Activated CD4-positive, alpha-beta memory T cell treated with anti-CD3 and anti-CD28 coated beads for 36 hours (primary cell): ENCODE measurements at regions of chr11 and their contacts with region 1.

Region 1: GRCh38 chr11:111601979-111602864 is at the start of gene SIK2:
- DNase-seq: peak; percentile 93
- H3K4me3 Mint-ChIP-seq: peak within 1 kb of the TSS; percentile 91
- H3K27ac Mint-ChIP-seq: peak within 1 kb of the TSS; percentile 77
- H3K4me1 Mint-ChIP-seq: peaks cover 30% of the 10 kb centered on the region
- H3K27me3 Mint-ChIP-seq: no peaks in the 10 kb centered on the region
- total RNA-seq, gene SIK2: 4.6 to 6.2 TPM

Region 2: DNA sequence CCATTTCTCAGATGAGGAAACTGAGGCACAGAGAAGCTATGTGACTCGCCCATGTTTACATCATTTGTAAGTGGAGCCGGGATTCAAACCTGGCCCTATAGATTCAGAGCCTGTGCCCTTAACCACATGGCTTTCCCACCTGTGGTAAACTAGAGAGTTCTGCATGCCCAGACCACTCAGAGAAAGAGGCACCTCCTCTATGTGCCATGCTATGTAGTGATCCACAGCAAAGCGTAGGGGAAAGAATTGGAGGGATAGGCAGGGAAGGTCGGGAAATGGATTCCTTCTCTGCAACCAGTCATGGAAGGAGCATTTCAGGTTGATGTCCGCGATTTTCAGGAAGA is 372.1 kb before region 1 on chr11:
- CTCF ChIA-PET with region 1: no interaction called
- POLR2A ChIA-PET with region 1: no interaction called
- intact Hi-C with region 1: no loop called
- DNase-seq: no peak
- H3K4me3 Mint-ChIP-seq: no peak overlapping the region
- H3K27ac Mint-ChIP-seq: no peak overlapping the region
- H3K4me1 Mint-ChIP-seq: peaks cover 15% of the 10 kb centered on the region
- H3K27me3 Mint-ChIP-seq: peaks cover 16% of the 10 kb centered on the region

Region 3: GRCh38 chr11:111531687-111532364 is 70.4 kb before region 1 on chr11:
- CTCF ChIA-PET with region 1: interaction called, 3 read pairs
- POLR2A ChIA-PET with region 1: no interaction called
- intact Hi-C with region 1: loop called (anchors 5 kb)
- DNase-seq: peak; percentile 85
- H3K4me3 Mint-ChIP-seq: no peak overlapping the region
- H3K27ac Mint-ChIP-seq: no peak overlapping the region
- H3K4me1 Mint-ChIP-seq: peaks cover 26% of the 10 kb centered on the region
- H3K27me3 Mint-ChIP-seq: peaks cover 25% of the 10 kb centered on the region

Region 4: GRCh38 chr11:111612224-111612623 is 10.0 kb after region 1 on chr11:
- CTCF ChIA-PET with region 1: interaction called, 14 read pairs
- POLR2A ChIA-PET with region 1: no interaction called
- intact Hi-C with region 1: no loop called
- DNase-seq: no peak
- H3K4me3 Mint-ChIP-seq: no peak overlapping the region
- H3K27ac Mint-ChIP-seq: no peak overlapping the region
- H3K4me1 Mint-ChIP-seq: peaks cover 9% of the 10 kb centered on the region
- H3K27me3 Mint-ChIP-seq: no peaks in the 10 kb centered on the region

Region 5: GRCh38 chr11:111766093-111766833 is 164.0 kb after region 1 on chr11 and contains the start of gene PPP2R1B:
- CTCF ChIA-PET with region 1: interaction called, 12 read pairs
- POLR2A ChIA-PET with region 1: interaction called, 4 read pairs
- intact Hi-C with region 1: loop called (anchors 1 kb)
- DNase-seq: peak; percentile 81
- H3K4me3 Mint-ChIP-seq: peak within 1 kb of the TSS; percentile 100
- H3K27ac Mint-ChIP-seq: peak within 1 kb of the TSS; percentile 89
- H3K4me1 Mint-ChIP-seq: peaks cover 34% of the 10 kb centered on the region
- H3K27me3 Mint-ChIP-seq: no peaks in the 10 kb centered on the region
- total RNA-seq, gene PPP2R1B: 49.4 to 51.1 TPM

Region 6: DNA sequence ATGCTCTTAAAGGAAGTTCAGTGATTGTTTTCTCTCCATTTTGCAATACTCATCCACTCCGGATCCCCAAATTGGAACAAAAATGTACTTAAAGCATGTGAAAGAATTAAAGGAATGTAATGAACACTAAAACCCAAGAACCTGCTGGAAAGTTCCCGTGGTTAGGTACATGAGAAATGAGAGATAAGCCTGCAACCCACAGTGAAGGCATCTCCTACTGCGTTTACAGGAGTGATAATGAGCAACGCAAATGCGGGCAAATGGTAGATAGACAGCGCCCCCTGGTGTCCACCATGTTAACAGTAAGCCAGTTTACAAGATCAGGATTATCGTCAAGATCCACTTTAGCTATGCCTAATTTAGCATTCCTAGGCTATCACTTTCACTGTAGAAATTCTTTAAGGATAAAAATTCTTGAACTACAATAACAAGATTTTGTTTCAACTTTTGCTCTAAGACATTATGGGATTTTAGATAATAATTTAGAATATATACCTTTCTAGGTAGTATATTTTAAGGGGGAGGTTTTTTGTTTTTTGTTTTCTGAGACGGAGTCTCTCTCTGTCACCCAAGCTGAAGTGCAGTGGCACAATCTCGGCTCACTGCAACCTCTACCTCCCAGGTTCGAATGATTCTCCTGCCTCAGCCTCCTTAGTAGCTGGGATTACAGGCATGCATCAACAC is 239.3 kb after region 1 on chr11:
- CTCF ChIA-PET with region 1: interaction called, 9 read pairs
- POLR2A ChIA-PET with region 1: no interaction called
- intact Hi-C with region 1: loop called (anchors 1 kb)
- DNase-seq: peak; percentile 91
- H3K4me3 Mint-ChIP-seq: no peak overlapping the region
- H3K27ac Mint-ChIP-seq: no peak overlapping the region
- H3K4me1 Mint-ChIP-seq: peaks cover 11% of the 10 kb centered on the region
- H3K27me3 Mint-ChIP-seq: no peaks in the 10 kb centered on the region

Region 7: DNA sequence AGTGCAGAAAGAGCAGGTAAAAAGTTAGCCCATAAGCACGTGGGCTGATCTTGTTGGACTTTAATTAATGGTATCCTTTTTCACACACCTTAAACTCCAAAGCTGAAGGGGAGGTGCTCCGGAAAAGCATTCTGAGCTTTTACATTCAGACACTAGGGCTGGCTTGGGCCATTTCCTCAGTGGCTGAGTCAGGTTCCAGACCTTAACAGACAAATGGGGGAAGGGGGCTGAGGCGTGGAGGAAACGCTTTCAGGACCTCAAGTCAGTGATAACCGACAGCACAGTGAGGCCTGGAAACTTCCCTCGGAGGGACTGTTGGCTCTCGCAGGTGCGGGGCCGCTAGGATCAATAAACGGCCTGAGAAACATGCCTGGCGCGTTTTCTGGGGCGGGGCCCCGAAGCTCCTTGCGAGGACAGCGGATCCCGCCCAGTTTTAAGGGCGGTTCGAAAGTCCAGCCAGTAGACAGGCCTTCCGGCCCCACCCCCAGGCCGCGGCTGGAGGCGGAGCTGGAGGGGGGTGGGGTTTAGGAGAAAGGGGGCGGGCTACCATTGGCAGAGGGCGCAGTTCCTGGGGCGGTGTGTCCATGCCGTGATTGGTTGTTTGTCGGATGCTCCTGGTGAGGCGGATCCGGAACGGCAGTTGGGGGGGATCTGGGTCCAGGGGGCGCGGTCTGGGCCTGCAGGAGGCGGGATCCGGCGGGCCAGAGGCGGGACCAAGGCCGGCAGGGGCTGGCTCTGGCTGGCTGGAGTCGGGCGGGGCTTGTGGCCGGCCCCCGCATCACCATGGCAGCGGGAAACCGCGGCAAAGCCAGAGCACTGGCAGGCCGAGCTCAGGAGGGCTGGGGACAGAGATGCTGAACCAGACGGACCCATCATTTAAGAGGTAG is 324.5 kb after region 1 on chr11:
- CTCF ChIA-PET with region 1: no interaction called
- POLR2A ChIA-PET with region 1: no interaction called
- intact Hi-C with region 1: loop called (anchors 5 kb)
- DNase-seq: peak; percentile 98
- H3K4me3 Mint-ChIP-seq: peak overlapping the region; percentile 84
- H3K27ac Mint-ChIP-seq: peak overlapping the region; percentile 86
- H3K4me1 Mint-ChIP-seq: peaks cover 13% of the 10 kb centered on the region
- H3K27me3 Mint-ChIP-seq: no peaks in the 10 kb centered on the region

Region 8: GRCh38 chr11:112280268-112281126 is 678.3 kb after region 1 on chr11:
- CTCF ChIA-PET with region 1: no interaction called
- POLR2A ChIA-PET with region 1: no interaction called
- intact Hi-C with region 1: loop called (anchors 5 kb)
- DNase-seq: peak; percentile 73
- H3K4me3 Mint-ChIP-seq: peak overlapping the region; percentile 84
- H3K27ac Mint-ChIP-seq: peak overlapping the region; percentile 65
- H3K4me1 Mint-ChIP-seq: peaks cover 15% of the 10 kb centered on the region
- H3K27me3 Mint-ChIP-seq: no peaks in the 10 kb centered on the region